Adrenal gland (tissue), 19 donors: ENCODE measurements at regions of chr7 and their contacts with region 1.

Region 1: DNA sequence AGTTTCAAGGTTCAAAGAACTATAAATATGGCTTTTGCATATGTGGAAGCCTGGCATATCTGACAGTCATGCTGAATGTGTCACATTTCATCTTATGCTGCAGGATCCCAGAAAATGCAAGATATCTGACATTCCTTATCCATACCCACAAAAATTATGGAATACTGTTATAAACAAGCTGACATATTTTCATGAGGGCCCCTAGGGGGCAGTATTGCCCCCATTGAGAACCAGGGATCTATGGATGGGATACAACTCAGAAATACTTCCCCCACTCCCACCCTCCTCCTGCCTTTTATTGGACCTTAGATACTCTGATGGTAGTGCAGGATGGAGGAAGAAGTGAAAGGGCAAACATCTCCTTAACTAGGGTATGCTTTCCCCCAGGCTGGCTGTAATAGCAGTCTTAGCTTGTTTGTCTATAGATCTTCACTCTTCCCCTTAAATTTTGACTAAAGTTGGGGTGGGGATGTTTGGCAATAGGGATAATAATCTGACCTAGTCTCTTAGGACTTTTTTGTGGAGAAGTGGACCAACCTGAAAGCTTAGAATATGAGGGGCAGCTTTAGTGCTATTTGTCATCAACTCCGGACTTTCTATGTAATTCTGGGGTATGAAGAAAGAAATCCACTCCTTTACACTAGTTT is 3.5 kb upstream of the GNGT1 start:
- DNase-seq: peak in 2 of 7 donors; percentile 18 to 34
- H3K4me3 ChIP-seq: no peak overlapping the region
- H3K27ac ChIP-seq: no peak overlapping the region
- H3K4me1 ChIP-seq: no peaks in the 10 kb centered on the region
- H3K27me3 ChIP-seq: no peaks in the 10 kb centered on the region
- CTCF ChIP-seq: peak; percentile 39 to 79 (median 63)
- POLR2A ChIP-seq: no peak

Region 2: DNA sequence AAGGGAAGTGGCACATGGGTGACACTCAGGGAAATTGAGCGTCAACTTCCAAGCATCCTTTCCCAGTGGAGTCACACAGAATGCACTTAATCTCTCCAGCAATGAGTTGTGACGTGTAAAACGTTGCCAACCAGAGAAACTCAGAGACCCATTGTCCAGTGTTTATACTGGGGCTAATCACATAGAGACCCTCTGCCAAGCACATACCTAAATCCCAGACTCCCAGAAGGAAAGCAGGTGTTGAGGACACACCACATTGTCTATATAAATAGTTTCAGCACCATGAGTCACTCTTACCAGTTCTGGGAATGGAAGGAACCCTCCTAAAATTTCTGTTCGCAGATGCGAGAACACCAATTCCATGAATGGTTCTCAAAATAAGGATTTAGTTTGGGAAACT is 177.7 kb after region 1 on chr7:
- intact Hi-C with region 1: loop called (anchors 5 to 10 kb)
- DNase-seq: no peak
- H3K4me3 ChIP-seq: no peak overlapping the region
- H3K27ac ChIP-seq: no peak overlapping the region
- H3K4me1 ChIP-seq: no peaks in the 10 kb centered on the region
- H3K27me3 ChIP-seq: no peaks in the 10 kb centered on the region
- CTCF ChIP-seq: no peak
- POLR2A ChIP-seq: no peak

Region 3: GRCh38 chr7:94087664-94088352 is 184.9 kb after region 1 on chr7:
- intact Hi-C with region 1: loop called (anchors 5 to 10 kb)
- DNase-seq: peak; percentile 29 to 76 (median 56)
- H3K4me3 ChIP-seq: peak overlapping the region in 2 of 4 donors; percentile 2 to 49
- H3K27ac ChIP-seq: no peak overlapping the region
- H3K4me1 ChIP-seq: peaks cover 9 to 13% of the 10 kb centered on the region in 2 donors
- H3K27me3 ChIP-seq: no peaks in the 10 kb centered on the region
- CTCF ChIP-seq: peak; percentile 59 to 80 (median 76)
- POLR2A ChIP-seq: no peak

Region 4: GRCh38 chr7:94223375-94224070 is 320.6 kb after region 1 on chr7:
- intact Hi-C with region 1: loop called in 1 of 2 experiments (anchors 5 kb)
- DNase-seq: peak in 3 of 7 donors; percentile 16 to 29 (median 17)
- H3K4me3 ChIP-seq: no peak overlapping the region
- H3K27ac ChIP-seq: no peak overlapping the region
- H3K4me1 ChIP-seq: peaks cover 0 to 9% of the 10 kb centered on the region in 2 donors
- H3K27me3 ChIP-seq: no peaks in the 10 kb centered on the region
- CTCF ChIP-seq: peak; percentile 34 to 71 (median 59)
- POLR2A ChIP-seq: no peak